GM13976 (cell line): ENCODE measurements at regions of chr9 and their contacts with region 1.

Region 1: DNA sequence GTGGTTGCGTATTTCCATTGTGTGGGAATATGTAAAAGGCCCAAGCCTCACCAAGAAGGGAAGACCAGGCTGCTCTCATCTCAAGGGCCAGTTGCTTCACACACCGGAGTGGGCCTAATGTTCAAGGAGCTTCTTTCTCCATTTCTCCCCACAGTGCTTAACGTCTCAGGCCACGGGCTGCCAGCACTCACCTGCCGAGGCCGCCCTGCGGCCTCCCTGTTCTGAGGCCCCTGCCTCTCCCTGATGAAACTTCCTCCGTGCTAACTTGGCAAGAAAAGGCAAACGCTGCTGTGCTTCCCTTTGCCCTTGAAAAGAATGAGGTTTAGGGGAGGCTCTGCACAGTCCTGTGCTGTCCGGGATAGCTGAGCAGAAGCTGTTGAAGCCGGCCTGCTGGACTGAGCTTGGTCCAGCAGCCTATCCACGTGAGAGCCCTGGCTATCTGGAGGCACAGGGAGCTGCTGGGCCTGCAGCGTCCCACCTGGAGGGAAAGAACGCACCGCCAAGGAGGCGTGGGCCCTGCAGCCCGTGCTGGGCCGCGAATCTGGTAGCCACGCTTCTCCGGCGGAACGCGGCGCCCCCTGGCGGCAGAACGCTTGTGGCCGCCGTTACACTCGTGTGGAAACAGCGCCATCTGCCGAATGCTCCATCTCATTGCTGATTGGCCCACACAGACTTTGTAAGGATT is 73.5 kb upstream of the PRSS3 start:
- DNase-seq: peak; percentile 86
- CTCF ChIP-seq: peak; percentile 100

Region 2: GRCh38 chr9:33638391-33638915 is 83.4 kb before region 1 on chr9:
- in situ Hi-C with region 1: loop called (anchors 5 kb)
- DNase-seq: no peak
- CTCF ChIP-seq: no peak